GM10248 (cell line): ENCODE measurements at regions of chr1 and their contacts with region 1.

Region 1: DNA sequence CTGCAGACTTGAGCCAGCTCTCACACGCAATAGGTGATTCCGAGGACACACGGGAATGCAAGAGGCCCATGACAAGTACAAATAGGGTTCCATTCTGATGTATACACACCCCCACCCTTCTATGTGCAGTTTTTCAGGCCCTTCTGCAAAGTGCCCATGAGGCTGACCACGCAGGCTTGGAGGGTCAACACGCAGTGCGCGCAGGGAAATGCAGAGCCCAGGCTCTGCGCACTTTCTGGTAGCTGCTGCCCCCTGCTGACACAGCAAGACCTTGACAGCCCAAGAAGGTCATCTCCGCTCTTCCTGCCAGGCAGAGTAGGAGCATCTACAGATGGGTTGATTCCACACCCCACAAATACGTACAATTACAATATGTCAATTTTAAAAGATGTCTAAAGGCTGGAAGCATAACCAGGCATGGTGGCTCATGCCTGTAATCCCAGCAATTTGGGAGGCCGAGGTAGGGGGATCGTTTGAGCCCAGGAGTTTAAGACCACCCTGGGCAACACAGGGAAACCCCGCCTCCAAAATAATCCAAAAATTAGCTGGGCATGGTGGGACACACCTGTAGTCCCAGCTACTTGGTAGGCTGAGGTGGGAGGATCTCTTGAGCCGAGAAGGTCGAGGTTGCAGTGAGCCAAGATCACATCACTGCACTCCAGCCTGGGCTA is 18.5 kb downstream of the SH3BP5L start:
- DNase-seq: peak; percentile 75
- CTCF ChIP-seq: peak; percentile 94

Region 2: GRCh38 chr1:248243204-248243603 is 564.0 kb before region 1 on chr1:
- CTCF ChIA-PET with region 1: interaction called, 30 read pairs
- POLR2A ChIA-PET with region 1: no interaction called
- DNase-seq: peak; percentile 49
- CTCF ChIP-seq: peak; percentile 79

Region 3: GRCh38 chr1:248404024-248404423 is 403.2 kb before region 1 on chr1:
- CTCF ChIA-PET with region 1: interaction called, 24 read pairs
- POLR2A ChIA-PET with region 1: no interaction called
- DNase-seq: no peak
- CTCF ChIP-seq: no peak

Region 4: GRCh38 chr1:248622570-248623001 is 184.6 kb before region 1 on chr1:
- CTCF ChIA-PET with region 1: interaction called, 242 read pairs
- POLR2A ChIA-PET with region 1: no interaction called
- DNase-seq: peak; percentile 66
- CTCF ChIP-seq: peak; percentile 58

Region 5: GRCh38 chr1:248793592-248793991 is 13.6 kb before region 1 on chr1:
- CTCF ChIA-PET with region 1: interaction called, 11 read pairs
- POLR2A ChIA-PET with region 1: no interaction called
- DNase-seq: no peak
- CTCF ChIP-seq: no peak

Region 6: GRCh38 chr1:248821101-248821500 is 13.9 kb after region 1 on chr1:
- CTCF ChIA-PET with region 1: interaction called, 41 read pairs
- POLR2A ChIA-PET with region 1: interaction called, 3 read pairs
- DNase-seq: no peak
- CTCF ChIP-seq: no peak